Heart left ventricle (tissue), 16 donors: ENCODE measurements at regions of chr7 and their contacts with region 1.

Region 1: DNA sequence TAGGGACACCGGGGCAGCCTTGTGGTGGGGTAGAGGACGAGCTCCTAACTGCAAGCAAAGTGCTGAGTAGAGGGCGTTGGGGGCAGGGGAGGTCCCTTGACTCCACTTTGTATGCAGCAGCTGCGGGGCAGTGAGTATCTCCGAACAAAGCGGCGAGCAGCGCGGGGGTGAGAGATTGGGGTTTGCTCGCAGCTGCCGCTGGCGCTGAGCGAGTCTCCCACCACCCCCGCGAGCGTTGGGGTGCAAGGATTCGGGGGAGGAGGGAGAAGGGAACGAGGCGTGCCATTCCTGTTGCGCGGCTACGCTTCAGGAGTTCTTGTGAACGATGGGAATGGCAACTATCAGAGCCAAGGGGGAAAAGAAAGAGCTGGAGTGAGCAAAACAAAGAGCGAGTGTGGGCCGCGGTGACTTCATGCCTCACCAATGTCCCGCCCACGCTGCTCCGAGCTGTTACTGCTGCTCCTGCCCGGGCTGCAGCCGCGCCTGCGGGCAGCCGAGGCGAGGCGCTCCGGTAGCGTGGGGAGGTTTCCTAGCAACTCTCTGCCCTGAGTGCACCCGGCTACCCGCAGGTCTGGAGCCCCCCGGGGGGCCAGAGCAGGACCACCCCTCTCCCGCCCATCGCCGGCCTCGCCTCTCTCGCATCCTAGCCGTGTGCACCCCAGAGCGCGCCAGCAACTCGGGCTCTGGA is at the start of gene ITGB8:
- DNase-seq: peak; percentile 82 to 90 (median 88)
- ATAC-seq: peak; percentile 82 to 95 (median 94)
- H3K4me3 ChIP-seq: peak within 1 kb of the TSS; percentile 55 to 77 (median 66)
- H3K27ac ChIP-seq: peak within 1 kb of the TSS; percentile 58 to 91 (median 78)
- H3K4me1 ChIP-seq: peaks cover 0 to 21% (median 6%) of the 10 kb centered on the region in 12 donors
- H3K27me3 ChIP-seq: peaks cover 0 to 18% (median 4%) of the 10 kb centered on the region in 9 donors
- CTCF ChIP-seq: no peak
- POLR2A ChIP-seq: no peak
- total RNA-seq, gene ITGB8: 0.93 to 16.0 (median 2.7) TPM

Region 2: DNA sequence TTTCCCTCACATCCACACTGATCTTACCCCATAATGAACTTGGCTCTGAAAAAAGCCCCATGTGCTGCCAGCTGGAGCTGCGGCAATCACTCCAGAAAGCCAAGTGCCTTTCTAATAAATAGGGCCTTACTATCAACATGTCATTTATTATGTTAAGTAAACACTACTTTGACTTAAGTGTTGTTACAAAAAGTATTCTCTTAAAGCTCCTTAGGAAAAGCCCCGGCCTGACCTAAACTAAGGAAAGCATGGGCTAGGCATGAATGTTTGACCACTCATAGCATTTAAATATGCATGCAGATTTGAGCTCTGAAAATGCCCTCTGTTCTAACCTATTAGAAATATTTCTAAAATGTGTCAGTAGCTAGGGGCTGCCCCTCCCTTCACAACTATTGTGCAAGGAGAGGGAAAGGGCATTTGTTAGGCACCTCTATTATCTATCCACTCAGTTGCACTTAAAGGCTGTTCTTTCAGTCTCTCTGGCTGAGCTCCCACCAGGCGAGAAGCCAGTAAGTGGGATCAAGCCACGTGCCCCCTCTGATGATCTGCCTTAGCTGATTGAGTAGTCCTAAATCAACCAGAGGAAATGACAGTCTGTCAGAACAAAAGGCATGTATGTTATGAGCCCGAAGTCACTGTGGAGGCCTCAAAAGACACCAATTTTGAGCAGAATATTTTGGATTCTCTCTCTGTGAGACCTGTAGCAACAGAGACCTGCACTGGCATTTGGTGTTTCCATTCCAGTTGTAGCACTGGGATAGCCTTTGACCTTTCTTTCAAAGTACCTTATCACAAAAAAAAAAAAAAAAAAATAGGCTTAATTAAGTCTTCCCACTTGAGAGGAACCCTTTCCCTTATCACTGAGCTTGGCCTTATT is 77.4 kb after region 1 on chr7:
- intact Hi-C with region 1: loop called in 1 of 10 experiments (anchors 10 kb)
- DNase-seq: peak; percentile 47 to 86 (median 68)
- ATAC-seq: peak; percentile 92 to 96 (median 94)
- H3K4me3 ChIP-seq: no peak overlapping the region
- H3K27ac ChIP-seq: peak overlapping the region; percentile 14 to 81 (median 53)
- H3K4me1 ChIP-seq: peaks cover 0 to 31% (median 20%) of the 10 kb centered on the region in 12 donors
- H3K27me3 ChIP-seq: no peaks in the 10 kb centered on the region
- CTCF ChIP-seq: no peak
- POLR2A ChIP-seq: no peak